Right lobe of liver (tissue), 6 donors: ENCODE measurements at regions of chr1 and their contacts with region 1.

Region 1: GRCh38 chr1:156625436-156626078 is 6.3 kb downstream of the HAPLN2 start:
- DNase-seq: peak in 1 of 3 donors; percentile 54
- ATAC-seq: peak; percentile 71 to 77 (median 74)
- H3K4me3 ChIP-seq: no peak overlapping the region
- H3K27ac ChIP-seq: no peak overlapping the region
- H3K4me1 ChIP-seq: peaks cover 0 to 19% (median 2%) of the 10 kb centered on the region in 4 donors
- H3K27me3 ChIP-seq: peaks cover 5 to 15% of the 10 kb centered on the region in 2 donors
- CTCF ChIP-seq: peak; percentile 63 to 73 (median 68)
- POLR2A ChIP-seq: no peak

Region 2: DNA sequence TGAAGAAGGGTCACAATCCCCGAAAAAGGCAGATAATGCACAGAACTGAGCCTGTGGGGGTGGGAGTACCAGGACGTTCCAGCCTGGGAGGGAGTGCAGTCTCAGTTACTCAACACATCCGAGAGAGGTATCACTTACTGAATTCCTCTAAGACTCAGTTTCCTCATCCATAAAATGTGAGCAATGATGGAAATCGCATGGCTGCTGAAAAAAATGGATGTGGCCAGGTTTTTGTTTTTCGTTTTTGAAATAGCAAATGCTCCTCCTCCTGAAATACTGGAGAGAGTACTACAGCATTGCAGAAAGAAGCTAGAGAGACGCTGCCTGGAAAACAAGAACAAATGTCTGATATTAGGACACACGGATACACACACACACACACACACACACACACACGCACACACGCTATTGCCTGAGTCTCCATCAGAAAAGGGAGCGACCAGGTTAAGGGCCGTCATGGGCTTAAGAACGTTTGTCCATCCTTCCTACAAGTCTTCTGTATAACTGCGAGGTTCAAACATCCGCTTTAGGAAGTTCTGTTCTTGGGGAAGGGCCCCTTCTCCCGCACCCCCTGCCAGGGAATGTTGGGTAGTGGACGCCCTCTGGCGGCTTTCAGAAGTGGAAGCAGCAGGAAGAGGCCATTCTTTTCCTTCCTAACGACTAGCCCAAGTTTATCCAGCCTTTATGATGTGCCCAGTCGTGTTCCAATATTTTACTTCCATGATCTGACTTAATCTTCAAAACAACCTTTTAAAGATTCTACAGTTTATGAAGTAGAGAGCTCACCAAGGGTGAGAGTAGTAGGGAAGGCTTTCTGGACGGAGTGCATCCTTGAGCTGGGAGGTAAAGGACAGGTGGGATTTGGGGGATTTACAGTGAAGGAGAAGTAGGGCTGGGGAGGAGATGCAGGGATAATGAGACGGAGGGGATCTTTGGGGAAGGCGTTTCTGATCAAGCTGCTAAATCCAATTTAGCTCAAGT is 52.3 kb after region 1 on chr1:
- intact Hi-C with region 1: loop called in 1 of 2 experiments (anchors 10 kb)
- DNase-seq: peak in 1 of 3 donors; percentile 52
- ATAC-seq: peak; percentile 74 to 77 (median 74)
- H3K4me3 ChIP-seq: peak overlapping the region in 2 of 3 donors; percentile 35 to 36
- H3K27ac ChIP-seq: peak overlapping the region in 2 of 3 donors; percentile 6 to 29
- H3K4me1 ChIP-seq: no peaks in the 10 kb centered on the region
- H3K27me3 ChIP-seq: peaks cover 0 to 7% of the 10 kb centered on the region in 2 donors
- CTCF ChIP-seq: peak; percentile 65 to 76 (median 69)
- POLR2A ChIP-seq: no peak

Region 3: DNA sequence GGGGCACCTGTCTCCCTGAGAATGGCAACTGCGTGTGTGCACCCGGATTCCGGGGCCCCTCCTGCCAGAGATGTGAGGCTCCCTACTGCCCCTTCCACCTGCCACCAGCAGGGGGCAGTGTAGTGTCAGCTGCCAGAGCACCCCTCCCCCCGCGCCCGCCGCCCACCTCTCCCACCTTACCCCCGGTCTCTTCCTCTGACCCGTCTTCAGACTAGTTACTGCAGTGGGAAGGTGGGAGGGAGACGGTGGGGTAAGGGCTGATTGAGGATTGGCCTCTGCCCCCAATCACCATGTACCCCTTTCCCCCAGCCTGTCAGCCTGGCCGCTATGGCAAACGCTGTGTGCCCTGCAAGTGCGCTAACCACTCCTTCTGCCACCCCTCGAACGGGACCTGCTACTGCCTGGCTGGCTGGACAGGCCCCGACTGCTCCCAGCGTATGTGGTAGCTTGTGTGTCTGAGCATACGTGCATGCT is 284.8 kb after region 1 on chr1:
- intact Hi-C with region 1: no loop called
- DNase-seq: peak in 2 of 3 donors; percentile 47 to 60
- ATAC-seq: peak; percentile 47 to 60 (median 54)
- H3K4me3 ChIP-seq: no peak overlapping the region
- H3K27ac ChIP-seq: no peak overlapping the region
- H3K4me1 ChIP-seq: no peaks in the 10 kb centered on the region
- H3K27me3 ChIP-seq: no peaks in the 10 kb centered on the region
- CTCF ChIP-seq: peak; percentile 48 to 86 (median 80)
- POLR2A ChIP-seq: no peak